ENCODE measurements at regions of chr10 and their contacts with region 1.

Region 1: GRCh38 chr10:45235798-45236231 is 79.6 kb downstream of the OR13A1 start:
- DNase-seq: no peak
- ATAC-seq: peak; percentile 63
- H3K4me3 ChIP-seq: no peak overlapping the region
- H3K27ac ChIP-seq: no peak overlapping the region
- H3K4me1 ChIP-seq: peaks cover 7% of the 10 kb centered on the region; the same call in 1 of the 2 replicates
- H3K27me3 ChIP-seq: peaks cover 0 to 15% of the 10 kb centered on the region in 2 experiments; a peak in 3 of 5 replicates
- CTCF ChIP-seq: no peak
- EP300 ChIP-seq: no peak
- POLR2A ChIP-seq: no peak
- RAD21 ChIP-seq: no peak

Region 2: GRCh38 chr10:45442662-45443061 is 206.8 kb after region 1 on chr10:
- CTCF ChIA-PET with region 1: no interaction called
- POLR2A ChIA-PET with region 1: no interaction called
- in situ Hi-C with region 1: loop called (anchors 10 kb)
- intact Hi-C with region 1: no loop called
- DNase-seq: no peak
- ATAC-seq: peak; percentile 75
- H3K4me3 ChIP-seq: no peak overlapping the region
- H3K27ac ChIP-seq: no peak overlapping the region
- H3K4me1 ChIP-seq: peaks cover 13% of the 10 kb centered on the region
- H3K27me3 ChIP-seq: peaks cover 0 to 2% of the 10 kb centered on the region in 2 experiments; a peak in 1 of 5 replicates
- CTCF ChIP-seq: peak; percentile 61
- EP300 ChIP-seq: no peak
- POLR2A ChIP-seq: no peak
- RAD21 ChIP-seq: no peak

Measured in HepG2 (cell line).